CD4-positive, alpha-beta T cell (primary cell): ENCODE measurements at regions of chr7 and their contacts with region 1.

Region 1: DNA sequence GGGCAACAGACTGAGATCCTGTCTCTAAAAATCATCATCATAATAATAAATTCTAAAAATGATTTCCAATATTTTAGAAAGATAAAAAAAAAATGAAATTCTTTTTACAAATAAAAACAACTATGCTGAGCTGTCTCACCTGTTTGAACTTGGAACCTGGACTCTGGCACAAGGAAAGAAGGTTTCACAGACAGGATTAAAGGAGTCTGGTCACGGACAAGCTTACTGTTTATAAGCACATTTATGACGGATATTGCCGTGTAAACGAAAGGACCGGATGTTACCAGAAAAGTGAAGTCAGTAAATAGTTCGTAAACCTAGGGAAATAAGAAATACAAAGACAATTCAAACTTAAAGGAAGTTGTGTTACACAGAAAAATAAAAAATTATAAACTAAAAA is 70.2 kb downstream of the KIAA1549 start:
- DNase-seq: no peak
- ATAC-seq: no peak
- H3K4me3 ChIP-seq: no peak overlapping the region
- H3K4me3 Mint-ChIP-seq: no peak overlapping the region
- H3K27ac ChIP-seq: no peak overlapping the region
- H3K27ac Mint-ChIP-seq: no peak overlapping the region
- H3K4me1 ChIP-seq: no peaks in the 10 kb centered on the region
- H3K4me1 Mint-ChIP-seq: no peaks in the 10 kb centered on the region
- H3K27me3 ChIP-seq: peaks cover 0 to 7% of the 10 kb centered on the region in 2 experiments
- H3K27me3 Mint-ChIP-seq: peaks cover 16% of the 10 kb centered on the region
- CTCF ChIP-seq: no peak

Region 2: GRCh38 chr7:138865843-138866242 is 45.2 kb before region 1 on chr7:
- CTCF ChIA-PET with region 1: no interaction called
- POLR2A ChIA-PET with region 1: no interaction called
- intact Hi-C with region 1: no loop called
- DNase-seq: peak; percentile 11 to 69 (median 41)
- ATAC-seq: peak; percentile 93
- H3K4me3 ChIP-seq: no peak overlapping the region
- H3K4me3 Mint-ChIP-seq: no peak overlapping the region
- H3K27ac ChIP-seq: no peak overlapping the region
- H3K27ac Mint-ChIP-seq: no peak overlapping the region
- H3K4me1 ChIP-seq: no peaks in the 10 kb centered on the region
- H3K4me1 Mint-ChIP-seq: no peaks in the 10 kb centered on the region
- H3K27me3 ChIP-seq: no peaks in the 10 kb centered on the region
- H3K27me3 Mint-ChIP-seq: peaks cover 4% of the 10 kb centered on the region
- CTCF ChIP-seq: peak; percentile 51

Region 3: GRCh38 chr7:138954545-138955475 is 43.8 kb after region 1 on chr7:
- CTCF ChIA-PET with region 1: no interaction called
- POLR2A ChIA-PET with region 1: no interaction called
- intact Hi-C with region 1: loop called in 1 of 2 experiments (anchors 5 kb)
- DNase-seq: no peak
- ATAC-seq: no peak
- H3K4me3 ChIP-seq: no peak overlapping the region
- H3K4me3 Mint-ChIP-seq: no peak overlapping the region
- H3K27ac ChIP-seq: no peak overlapping the region
- H3K27ac Mint-ChIP-seq: no peak overlapping the region
- H3K4me1 ChIP-seq: no peaks in the 10 kb centered on the region
- H3K4me1 Mint-ChIP-seq: no peaks in the 10 kb centered on the region
- H3K27me3 ChIP-seq: no peaks in the 10 kb centered on the region
- H3K27me3 Mint-ChIP-seq: peaks cover 5% of the 10 kb centered on the region
- CTCF ChIP-seq: no peak